CD8-positive, alpha-beta T cell (primary cell): ENCODE measurements at regions of chr9 and their contacts with region 1.

Region 1: GRCh38 chr9:69554945-69555344 is 117.2 kb downstream of the APBA1 start:
- DNase-seq: no peak
- ATAC-seq: no peak
- H3K4me3 ChIP-seq: no peak overlapping the region
- H3K4me3 Mint-ChIP-seq: no peak overlapping the region
- H3K27ac ChIP-seq: no peak overlapping the region
- H3K27ac Mint-ChIP-seq: no peak overlapping the region
- H3K4me1 ChIP-seq: no peaks in the 10 kb centered on the region
- H3K4me1 Mint-ChIP-seq: no peaks in the 10 kb centered on the region
- H3K27me3 ChIP-seq: no peaks in the 10 kb centered on the region
- H3K27me3 Mint-ChIP-seq: peaks cover 22% of the 10 kb centered on the region
- CTCF ChIP-seq: no peak

Region 2: GRCh38 chr9:69542942-69543704 is 11.8 kb before region 1 on chr9:
- CTCF ChIA-PET with region 1: no interaction called
- POLR2A ChIA-PET with region 1: no interaction called
- intact Hi-C with region 1: loop called in 1 of 2 experiments (anchors 2 kb)
- DNase-seq: no peak
- ATAC-seq: no peak
- H3K4me3 ChIP-seq: no peak overlapping the region
- H3K4me3 Mint-ChIP-seq: no peak overlapping the region
- H3K27ac ChIP-seq: no peak overlapping the region
- H3K27ac Mint-ChIP-seq: no peak overlapping the region
- H3K4me1 ChIP-seq: no peaks in the 10 kb centered on the region
- H3K4me1 Mint-ChIP-seq: no peaks in the 10 kb centered on the region
- H3K27me3 ChIP-seq: no peaks in the 10 kb centered on the region
- H3K27me3 Mint-ChIP-seq: peaks cover 16% of the 10 kb centered on the region
- CTCF ChIP-seq: no peak

Region 3: DNA sequence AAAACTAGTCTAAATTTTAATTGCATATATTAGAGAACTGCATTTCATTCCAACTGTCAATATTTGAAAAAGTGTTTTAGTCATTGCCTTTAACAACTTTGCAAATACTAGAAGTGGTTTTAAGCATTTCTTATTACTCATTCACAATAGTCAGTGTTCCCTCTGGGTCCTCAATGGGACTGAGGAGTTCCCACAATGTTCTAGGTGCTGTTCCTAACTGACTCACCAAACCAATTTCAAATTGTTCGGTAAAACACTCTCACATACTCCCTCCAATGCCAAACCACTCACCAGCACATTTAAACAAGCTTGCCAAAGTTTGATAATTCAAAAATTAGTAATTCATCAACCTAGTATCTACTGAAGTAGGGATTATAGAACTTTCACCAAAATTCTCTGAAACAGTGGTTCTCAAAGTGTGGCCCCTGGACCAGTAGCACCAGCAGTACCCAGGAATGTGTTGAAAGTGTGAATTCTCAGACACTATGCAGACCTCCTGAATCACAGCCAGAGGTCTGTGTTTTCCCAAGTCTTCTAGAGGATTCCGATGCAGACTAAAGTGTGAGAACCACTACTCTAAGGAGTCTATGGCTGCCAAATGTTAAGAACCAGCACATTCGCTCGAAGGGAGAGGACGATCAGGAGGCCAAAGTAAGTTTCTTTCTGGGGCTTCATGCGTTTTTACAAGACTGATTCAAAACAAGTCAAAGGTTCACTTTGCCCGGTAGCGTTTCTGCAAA is 44.5 kb after region 1 on chr9:
- CTCF ChIA-PET with region 1: no interaction called
- POLR2A ChIA-PET with region 1: no interaction called
- intact Hi-C with region 1: no loop called
- DNase-seq: no peak
- ATAC-seq: no peak
- H3K4me3 ChIP-seq: no peak overlapping the region
- H3K4me3 Mint-ChIP-seq: no peak overlapping the region
- H3K27ac ChIP-seq: no peak overlapping the region
- H3K27ac Mint-ChIP-seq: no peak overlapping the region
- H3K4me1 ChIP-seq: no peaks in the 10 kb centered on the region
- H3K4me1 Mint-ChIP-seq: no peaks in the 10 kb centered on the region
- H3K27me3 ChIP-seq: no peaks in the 10 kb centered on the region
- H3K27me3 Mint-ChIP-seq: peaks cover 7% of the 10 kb centered on the region
- CTCF ChIP-seq: no peak